Activated naive CD4-positive, alpha-beta T cell treated with anti-CD3 and anti-CD28 coated beads for 36 hours (primary cell): ENCODE measurements at regions of chr15 and their contacts with region 1.

Region 1: DNA sequence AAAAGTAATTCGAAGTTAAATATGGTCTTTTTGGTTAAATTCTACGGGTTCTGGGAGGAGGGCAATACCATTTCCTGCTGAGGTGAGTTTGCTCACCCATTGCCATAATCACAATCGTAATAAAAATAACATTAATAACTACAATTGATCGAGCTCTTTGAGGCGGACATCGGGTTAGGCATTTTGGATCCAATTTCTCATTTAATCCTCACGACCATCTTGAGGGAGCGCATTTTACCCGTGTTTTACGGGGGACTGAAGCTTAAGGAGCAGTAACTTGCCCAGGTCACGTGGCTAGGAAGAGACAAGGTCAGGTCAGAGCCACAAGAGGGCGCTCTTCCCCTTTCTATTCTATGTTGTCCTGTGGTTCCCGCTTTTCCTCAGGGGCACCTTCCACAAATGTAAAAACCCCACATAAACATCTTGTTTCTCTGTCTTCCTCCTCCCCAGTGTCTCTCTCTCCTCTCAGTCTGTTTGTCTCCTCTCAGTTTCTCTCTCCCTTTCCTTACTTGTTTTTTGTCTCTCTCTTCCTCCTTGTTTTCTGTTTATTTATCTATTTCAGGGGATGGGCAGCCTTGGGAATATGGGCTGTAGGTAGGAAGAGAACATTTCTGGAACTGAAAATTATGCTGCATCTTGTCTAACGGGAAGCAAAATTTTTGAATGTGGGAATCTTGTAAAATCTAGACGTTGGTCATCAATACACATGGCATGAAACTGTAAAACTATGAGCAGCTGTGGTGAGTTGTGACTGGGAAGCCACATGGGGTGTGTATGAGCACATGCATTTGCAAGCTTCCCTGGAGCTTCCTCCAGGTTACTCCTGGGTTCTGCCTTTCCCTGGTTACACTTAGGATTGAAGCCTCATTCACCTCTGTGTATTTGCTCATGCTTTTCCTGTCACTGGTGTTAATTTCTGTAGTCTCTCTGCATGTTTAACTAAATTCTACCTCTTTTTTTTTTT is 71.0 kb downstream of the SQOR start:
- DNase-seq: peak; percentile 79
- H3K4me3 Mint-ChIP-seq: peak overlapping the region; percentile 77
- H3K27ac Mint-ChIP-seq: peak overlapping the region; percentile 48
- H3K4me1 Mint-ChIP-seq: peaks cover 11% of the 10 kb centered on the region
- H3K27me3 Mint-ChIP-seq: peaks cover 3% of the 10 kb centered on the region

Region 2: DNA sequence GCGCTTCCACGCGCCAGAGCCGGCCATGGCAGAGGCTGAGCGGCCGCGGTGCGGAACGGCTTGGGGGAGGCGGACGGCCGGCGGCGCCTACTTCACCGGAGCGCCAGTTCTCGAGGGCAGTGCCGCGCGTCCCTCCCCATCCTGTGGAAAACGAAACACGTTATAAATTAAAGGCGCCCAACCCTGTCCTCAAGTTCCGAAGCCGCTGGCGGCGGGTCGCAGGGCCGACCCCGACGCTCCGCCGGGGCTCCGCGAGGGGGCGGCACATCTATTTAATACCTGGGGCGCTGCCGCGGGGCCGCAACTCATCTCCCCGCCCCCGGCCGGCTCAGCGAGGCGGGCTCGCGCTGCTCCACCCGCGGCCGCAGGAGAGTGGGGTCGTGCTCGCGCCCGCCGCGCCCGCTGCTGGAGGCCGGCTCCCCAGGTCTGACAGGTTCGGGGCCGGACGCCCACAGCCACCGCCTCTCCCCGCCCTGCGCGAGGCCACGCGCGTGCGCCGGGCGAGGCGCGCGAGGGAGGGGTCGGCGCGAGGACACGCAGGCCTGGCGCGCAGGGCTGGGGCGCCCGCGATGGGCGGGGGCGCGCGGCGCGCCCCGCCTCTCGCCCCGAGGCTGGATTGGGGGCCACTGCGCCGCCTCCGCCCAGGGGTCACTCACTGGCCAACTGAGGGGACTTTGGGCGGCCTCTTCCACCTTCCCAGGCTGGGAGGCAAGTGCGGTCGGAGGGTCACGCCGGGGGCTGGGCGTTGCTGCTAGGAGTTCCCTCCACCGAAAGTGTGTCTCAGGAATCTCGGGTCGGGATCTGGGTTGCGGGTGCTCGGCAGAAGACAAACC is 183.2 kb before region 1 on chr15 and contains the start of gene SLC30A4:
- CTCF ChIA-PET with region 1: no interaction called
- intact Hi-C with region 1: loop called (anchors 5 kb)
- DNase-seq: peak; percentile 46
- H3K4me3 Mint-ChIP-seq: peak within 1 kb of the TSS; percentile 89
- H3K27ac Mint-ChIP-seq: no peak within 1 kb of the TSS
- H3K4me1 Mint-ChIP-seq: peaks cover 15% of the 10 kb centered on the region
- H3K27me3 Mint-ChIP-seq: no peaks in the 10 kb centered on the region
- total RNA-seq, gene SLC30A4: 1.0 to 1.2 TPM

Region 3: GRCh38 chr15:45634442-45635190 is 71.2 kb before region 1 on chr15 and contains the start of gene SQOR:
- CTCF ChIA-PET with region 1: interaction called, 6 read pairs
- intact Hi-C with region 1: loop called (anchors 2 kb)
- DNase-seq: peak; percentile 76
- H3K4me3 Mint-ChIP-seq: peak within 1 kb of the TSS; percentile 99
- H3K27ac Mint-ChIP-seq: peak within 1 kb of the TSS; percentile 86
- H3K4me1 Mint-ChIP-seq: peaks cover 43% of the 10 kb centered on the region
- H3K27me3 Mint-ChIP-seq: no peaks in the 10 kb centered on the region
- total RNA-seq, gene SQOR: 54.3 to 56.4 TPM

Region 4: GRCh38 chr15:45795440-45796069 is 89.8 kb after region 1 on chr15:
- CTCF ChIA-PET with region 1: interaction called, 15 read pairs
- intact Hi-C with region 1: loop called (anchors 1 kb)
- DNase-seq: peak; percentile 41
- H3K4me3 Mint-ChIP-seq: no peak overlapping the region
- H3K27ac Mint-ChIP-seq: no peak overlapping the region
- H3K4me1 Mint-ChIP-seq: no peaks in the 10 kb centered on the region
- H3K27me3 Mint-ChIP-seq: peaks cover 13% of the 10 kb centered on the region

Region 5: GRCh38 chr15:47196057-47196456 is 1490.3 kb after region 1 on chr15:
- CTCF ChIA-PET with region 1: no interaction called
- intact Hi-C with region 1: loop called (anchors 10 kb)
- DNase-seq: peak; percentile 67
- H3K4me3 Mint-ChIP-seq: no peak overlapping the region
- H3K27ac Mint-ChIP-seq: no peak overlapping the region
- H3K4me1 Mint-ChIP-seq: no peaks in the 10 kb centered on the region
- H3K27me3 Mint-ChIP-seq: peaks cover 18% of the 10 kb centered on the region